GM23248 (cell line): ENCODE measurements at regions of chr21 and their contacts with region 1.

Region 1: GRCh38 chr21:42964546-42965225 is 9.7 kb upstream of the PKNOX1 start:
- DNase-seq: no peak
- H3K4me3 ChIP-seq: no peak overlapping the region
- H3K27ac ChIP-seq: no peak overlapping the region
- H3K4me1 ChIP-seq: no peaks in the 10 kb centered on the region
- H3K27me3 ChIP-seq: no peaks in the 10 kb centered on the region

Region 2: GRCh38 chr21:43012595-43012994 is 47.9 kb after region 1 on chr21:
- in situ Hi-C with region 1: loop called (anchors 5 kb)
- DNase-seq: peak; percentile 51
- H3K4me3 ChIP-seq: no peak overlapping the region
- H3K27ac ChIP-seq: no peak overlapping the region
- H3K4me1 ChIP-seq: no peaks in the 10 kb centered on the region
- H3K27me3 ChIP-seq: no peaks in the 10 kb centered on the region